ENCODE measurements at regions of chr4 and their contacts with region 1.

Region 1: GRCh38 chr4:158182736-158183135 is 9.9 kb upstream of the GASK1B start:
- DNase-seq: no peak
- ATAC-seq: peak; percentile 39
- H3K4me3 Mint-ChIP-seq: no peak overlapping the region
- H3K27ac Mint-ChIP-seq: no peak overlapping the region
- H3K4me1 Mint-ChIP-seq: peaks cover 4% of the 10 kb centered on the region; the same call in 1 of the 2 replicates
- H3K27me3 Mint-ChIP-seq: no peaks in the 10 kb centered on the region
- CTCF ChIP-seq: no peak

Region 2: GRCh38 chr4:158172261-158173258 is 10.2 kb before region 1 on chr4 and contains the start of gene GASK1B:
- CTCF ChIA-PET with region 1: interaction called, 12 read pairs
- POLR2A ChIA-PET with region 1: no interaction called
- DNase-seq: peak; percentile 20
- ATAC-seq: peak; percentile 56
- H3K4me3 Mint-ChIP-seq: no peak within 1 kb of the TSS
- H3K27ac Mint-ChIP-seq: no peak within 1 kb of the TSS
- H3K4me1 Mint-ChIP-seq: peaks cover 10% of the 10 kb centered on the region
- H3K27me3 Mint-ChIP-seq: no peaks in the 10 kb centered on the region
- CTCF ChIP-seq: peak; percentile 33; the same call in 1 of the 2 replicates
- total RNA-seq, gene GASK1B: 0.23 to 0.32 TPM (median 0.24 TPM) in 3 replicates